SK-N-SH (cell line): ENCODE measurements at regions of chr7 and their contacts with region 1.

Region 1: GRCh38 chr7:28020302-28020940 is 160.2 kb downstream of the JAZF1 start:
- DNase-seq: peak; percentile 84
- H3K4me3 ChIP-seq: no peak overlapping the region; a peak in 1 of 4 replicates
- H3K27ac ChIP-seq: no peak overlapping the region
- H3K4me1 ChIP-seq: peaks cover 7 to 14% of the 10 kb centered on the region in 2 experiments; a peak in 2 of 4 replicates
- H3K27me3 ChIP-seq: no peaks in the 10 kb centered on the region
- CTCF ChIP-seq: peak; percentile 97
- EP300 ChIP-seq: no peak
- RAD21 ChIP-seq: peak; percentile 99

Region 2: GRCh38 chr7:27196287-27196767 is 824.1 kb before region 1 on chr7:
- CTCF ChIA-PET with region 1: interaction called, 51 read pairs
- POLR2A ChIA-PET with region 1: no interaction called
- DNase-seq: peak; percentile 83
- H3K4me3 ChIP-seq: peak overlapping the region in 1 of 2 experiments; percentile 15; a peak in 1 of 4 replicates
- H3K27ac ChIP-seq: no peak overlapping the region
- H3K4me1 ChIP-seq: peaks cover 0 to 4% of the 10 kb centered on the region in 2 experiments; a peak in 1 of 4 replicates
- H3K27me3 ChIP-seq: peaks cover 82% of the 10 kb centered on the region
- CTCF ChIP-seq: peak; percentile 99
- EP300 ChIP-seq: no peak
- RAD21 ChIP-seq: peak; percentile 97

Region 3: DNA sequence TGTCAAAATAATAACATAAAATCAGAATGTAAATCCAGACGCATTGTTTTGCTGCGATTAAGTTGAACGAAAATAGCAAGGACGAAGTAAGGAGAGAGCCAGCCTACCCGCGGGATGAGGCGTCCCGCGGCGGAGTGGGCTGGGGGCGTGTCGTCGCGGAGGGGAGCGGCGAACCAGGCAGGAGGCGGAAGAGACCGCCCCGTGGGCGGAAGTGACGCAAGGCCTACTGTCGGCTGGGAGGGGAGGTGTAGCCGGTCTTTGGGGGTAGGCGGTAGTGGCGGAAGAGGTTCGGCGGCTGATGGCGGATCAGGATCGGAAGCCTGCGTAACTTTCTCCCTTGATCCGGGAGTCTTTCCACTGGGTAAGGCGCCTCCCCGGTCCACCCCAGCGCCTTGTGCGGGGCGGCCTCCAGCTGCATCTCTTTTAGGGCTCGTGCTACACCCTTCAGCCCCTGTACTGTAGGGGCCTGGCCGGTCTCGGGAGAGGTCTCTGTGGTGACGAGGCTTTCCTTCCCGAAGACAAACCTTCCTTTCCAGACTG is 280.4 kb before region 1 on chr7 and contains the start of gene TAX1BP1:
- CTCF ChIA-PET with region 1: interaction called, 30 read pairs
- POLR2A ChIA-PET with region 1: no interaction called
- DNase-seq: peak; percentile 99
- H3K4me3 ChIP-seq: peak within 1 kb of the TSS; percentile 83 to 99
- H3K27ac ChIP-seq: peak within 1 kb of the TSS; percentile 94 to 97
- H3K4me1 ChIP-seq: peaks cover 13 to 14% of the 10 kb centered on the region in 2 experiments; a peak in 2 of 4 replicates
- H3K27me3 ChIP-seq: no peaks in the 10 kb centered on the region
- CTCF ChIP-seq: no peak
- EP300 ChIP-seq: no peak; a peak in 1 of 4 replicates
- RAD21 ChIP-seq: no peak
- polyA plus RNA-seq, gene TAX1BP1: 70.3 and 108 TPM in 2 replicates

Region 4: DNA sequence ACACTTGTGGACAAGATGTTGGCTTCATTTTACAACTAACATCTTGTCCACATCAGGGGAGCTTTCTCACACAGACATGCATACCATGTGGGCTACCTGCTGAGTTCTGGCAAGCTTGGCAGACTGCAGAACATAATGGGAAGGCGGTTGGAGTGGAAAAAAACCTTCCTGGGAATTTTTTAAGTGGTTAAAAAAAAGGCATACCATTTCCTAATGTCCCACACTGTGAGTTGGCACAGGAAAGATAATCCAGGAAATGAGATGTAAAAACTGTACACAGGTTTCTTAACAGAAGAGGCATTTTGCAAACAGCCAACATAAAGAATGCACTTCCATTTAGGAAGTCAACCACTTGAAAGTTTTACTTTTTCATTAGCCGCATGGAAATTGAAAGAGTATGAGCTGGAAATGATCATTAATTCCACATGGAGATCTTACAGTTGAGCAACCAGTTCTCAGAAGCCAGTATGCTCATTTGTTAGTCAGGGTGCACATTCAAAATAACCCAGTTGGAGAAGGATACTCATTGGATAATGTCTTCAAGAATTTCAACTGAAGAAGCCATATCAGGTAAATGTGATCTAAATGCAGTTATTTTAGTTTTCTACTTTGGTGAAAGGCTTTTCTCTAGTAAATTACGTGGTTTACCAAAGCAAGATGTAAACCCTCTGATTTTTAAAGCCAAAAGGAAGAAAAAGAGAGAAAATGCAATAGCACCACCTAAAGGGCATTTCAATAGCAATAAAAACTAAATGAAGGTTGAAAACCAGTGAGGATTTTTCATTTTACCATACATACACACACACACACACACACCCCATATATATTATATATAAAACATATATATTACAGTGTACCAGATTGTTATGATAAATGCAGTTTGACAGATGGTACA is 86.5 kb before region 1 on chr7:
- CTCF ChIA-PET with region 1: interaction called, 12 read pairs
- POLR2A ChIA-PET with region 1: no interaction called
- DNase-seq: no peak
- H3K4me3 ChIP-seq: no peak overlapping the region
- H3K27ac ChIP-seq: no peak overlapping the region
- H3K4me1 ChIP-seq: no peaks in the 10 kb centered on the region
- H3K27me3 ChIP-seq: no peaks in the 10 kb centered on the region
- CTCF ChIP-seq: peak; percentile 61
- EP300 ChIP-seq: no peak
- RAD21 ChIP-seq: peak; percentile 54

Region 5: GRCh38 chr7:27994639-27995038 is 25.8 kb before region 1 on chr7:
- CTCF ChIA-PET with region 1: interaction called, 24 read pairs
- POLR2A ChIA-PET with region 1: no interaction called
- DNase-seq: peak; percentile 34
- H3K4me3 ChIP-seq: no peak overlapping the region
- H3K27ac ChIP-seq: peak overlapping the region in 1 of 2 experiments; percentile 72; a peak in 2 of 4 replicates
- H3K4me1 ChIP-seq: peaks cover 9 to 13% of the 10 kb centered on the region in 2 experiments
- H3K27me3 ChIP-seq: no peaks in the 10 kb centered on the region
- CTCF ChIP-seq: no peak
- EP300 ChIP-seq: 0 out of 4 replicates have a peak, but pooled peaks of 1 of the 2 experiments have one; percentile 16
- RAD21 ChIP-seq: no peak

Region 6: GRCh38 chr7:28038175-28038797 is 17.9 kb after region 1 on chr7:
- CTCF ChIA-PET with region 1: interaction called, 68 read pairs
- POLR2A ChIA-PET with region 1: no interaction called
- DNase-seq: no peak
- H3K4me3 ChIP-seq: peak overlapping the region in 1 of 2 experiments; percentile 1; a peak in 1 of 4 replicates
- H3K27ac ChIP-seq: peak overlapping the region; percentile 89 to 96; a peak in 3 of 4 replicates
- H3K4me1 ChIP-seq: peaks cover 12 to 57% of the 10 kb centered on the region in 2 experiments
- H3K27me3 ChIP-seq: no peaks in the 10 kb centered on the region
- CTCF ChIP-seq: no peak
- EP300 ChIP-seq: no peak
- RAD21 ChIP-seq: no peak

Region 7: DNA sequence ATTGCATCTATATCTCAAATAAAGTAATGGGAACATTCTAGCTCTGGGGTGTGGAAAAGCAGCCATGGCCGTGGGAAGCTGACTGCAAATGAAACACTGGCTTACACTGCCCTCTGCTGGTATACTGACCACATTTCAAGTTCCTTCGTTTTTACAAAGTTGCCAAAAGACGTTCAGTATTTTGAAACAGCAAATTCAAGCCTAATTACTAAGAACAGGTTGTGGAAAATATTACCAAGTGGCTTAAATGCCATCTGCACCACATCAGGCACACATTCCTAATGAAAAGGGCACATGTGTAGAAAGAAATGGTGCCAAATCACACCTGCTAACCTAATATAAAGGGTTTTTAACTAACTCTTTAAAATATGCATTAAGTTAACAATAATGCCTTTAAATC is 76.3 kb after region 1 on chr7:
- CTCF ChIA-PET with region 1: interaction called, 58 read pairs
- POLR2A ChIA-PET with region 1: no interaction called
- DNase-seq: peak; percentile 84
- H3K4me3 ChIP-seq: no peak overlapping the region
- H3K27ac ChIP-seq: no peak overlapping the region
- H3K4me1 ChIP-seq: no peaks in the 10 kb centered on the region
- H3K27me3 ChIP-seq: no peaks in the 10 kb centered on the region
- CTCF ChIP-seq: peak; percentile 99
- EP300 ChIP-seq: no peak
- RAD21 ChIP-seq: peak; percentile 98